Body of pancreas (tissue), 4 donors: ENCODE measurements at regions of chr9 and their contacts with region 1.

Region 1: DNA sequence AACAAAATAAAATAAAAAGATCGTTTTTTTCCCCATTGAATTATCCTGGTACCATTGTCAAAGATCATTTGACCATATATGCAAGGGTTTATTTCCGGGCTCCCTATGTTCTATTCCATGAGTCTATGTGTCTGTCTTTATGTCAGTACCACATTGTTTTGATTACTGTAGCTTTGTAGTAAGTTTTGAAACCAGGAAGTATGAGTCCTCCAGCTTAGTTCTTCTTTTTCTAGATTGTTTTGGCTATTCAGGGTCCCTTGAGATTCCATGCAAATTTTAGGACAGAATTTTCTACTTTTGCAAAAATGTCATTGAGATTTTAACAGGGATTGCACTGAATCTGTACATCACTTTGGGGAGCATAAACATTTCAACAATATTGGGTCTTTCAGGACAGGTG is 18.7 kb upstream of the EEIG1 start:
- DNase-seq: no peak
- ATAC-seq: no peak
- H3K4me3 ChIP-seq: no peak overlapping the region
- H3K27ac ChIP-seq: no peak overlapping the region
- H3K4me1 ChIP-seq: no peaks in the 10 kb centered on the region
- H3K27me3 ChIP-seq: no peaks in the 10 kb centered on the region
- CTCF ChIP-seq: no peak
- POLR2A ChIP-seq: no peak

Region 2: GRCh38 chr9:128034821-128035764 is 35.6 kb after region 1 on chr9:
- intact Hi-C with region 1: loop called (anchors 5 kb)
- DNase-seq: peak; percentile 76 to 85 (median 80)
- ATAC-seq: peak; percentile 100
- H3K4me3 ChIP-seq: no peak overlapping the region
- H3K27ac ChIP-seq: no peak overlapping the region
- H3K4me1 ChIP-seq: peaks cover 9% of the 10 kb centered on the region
- H3K27me3 ChIP-seq: no peaks in the 10 kb centered on the region
- CTCF ChIP-seq: peak; percentile 70 to 98 (median 97)
- POLR2A ChIP-seq: no peak